ENCODE measurements at regions of chr12 and their contacts with region 1.

Region 1: GRCh38 chr12:17763366-17763765 is 326.6 kb downstream of the RERGL start:
- DNase-seq: no peak
- H3K4me3 Mint-ChIP-seq: no peak overlapping the region
- H3K27ac Mint-ChIP-seq: no peak overlapping the region
- H3K4me1 Mint-ChIP-seq: no peaks in the 10 kb centered on the region
- H3K27me3 Mint-ChIP-seq: no peaks in the 10 kb centered on the region

Region 2: GRCh38 chr12:17841496-17841895 is 78.1 kb after region 1 on chr12:
- intact Hi-C with region 1: loop called (anchors 5 kb)
- DNase-seq: no peak
- H3K4me3 Mint-ChIP-seq: no peak overlapping the region
- H3K27ac Mint-ChIP-seq: no peak overlapping the region
- H3K4me1 Mint-ChIP-seq: no peaks in the 10 kb centered on the region
- H3K27me3 Mint-ChIP-seq: no peaks in the 10 kb centered on the region

Region 3: GRCh38 chr12:17853054-17853453 is 89.7 kb after region 1 on chr12:
- intact Hi-C with region 1: loop called (anchors 2 kb)
- DNase-seq: no peak
- H3K4me3 Mint-ChIP-seq: no peak overlapping the region
- H3K27ac Mint-ChIP-seq: no peak overlapping the region
- H3K4me1 Mint-ChIP-seq: no peaks in the 10 kb centered on the region
- H3K27me3 Mint-ChIP-seq: no peaks in the 10 kb centered on the region

Measured in activated T-helper 1 cell treated with anti-CD3 and anti-CD28 coated beads, Interleukin-12 subunit alpha, Interleukin-12 subunit beta, Interleukin-2, Interleukin-4 antibody, amounts not matched to agents 30 ng/mL and 10 ng/mL and 1 ng/mL, durations not matched to agents 14 hours and 24 hours and 36 hours (primary cell).